A673 (cell line): ENCODE measurements at regions of chr3 and their contacts with region 1.

Region 1: GRCh38 chr3:167882067-167882667 is 146.6 kb downstream of the SERPINI1 start:
- DNase-seq: peak; percentile 54
- H3K4me3 ChIP-seq: no peak overlapping the region
- H3K27ac ChIP-seq: no peak overlapping the region
- H3K4me1 ChIP-seq: no peaks in the 10 kb centered on the region
- H3K27me3 ChIP-seq: no peaks in the 10 kb centered on the region
- CTCF ChIP-seq: peak; percentile 70

Region 2: GRCh38 chr3:167380004-167380689 is 502.0 kb before region 1 on chr3 and contains the start of gene ZBBX:
- CTCF ChIA-PET with region 1: interaction called, 13 read pairs
- POLR2A ChIA-PET with region 1: no interaction called
- intact Hi-C with region 1: loop called (anchors 1 kb)
- DNase-seq: peak; percentile 90
- H3K4me3 ChIP-seq: peak within 1 kb of the TSS; percentile 38
- H3K27ac ChIP-seq: no peak within 1 kb of the TSS
- H3K4me1 ChIP-seq: no peaks in the 10 kb centered on the region
- H3K27me3 ChIP-seq: no peaks in the 10 kb centered on the region
- CTCF ChIP-seq: peak; percentile 94
- total RNA-seq, gene ZBBX: not detected in 2 replicates

Region 3: DNA sequence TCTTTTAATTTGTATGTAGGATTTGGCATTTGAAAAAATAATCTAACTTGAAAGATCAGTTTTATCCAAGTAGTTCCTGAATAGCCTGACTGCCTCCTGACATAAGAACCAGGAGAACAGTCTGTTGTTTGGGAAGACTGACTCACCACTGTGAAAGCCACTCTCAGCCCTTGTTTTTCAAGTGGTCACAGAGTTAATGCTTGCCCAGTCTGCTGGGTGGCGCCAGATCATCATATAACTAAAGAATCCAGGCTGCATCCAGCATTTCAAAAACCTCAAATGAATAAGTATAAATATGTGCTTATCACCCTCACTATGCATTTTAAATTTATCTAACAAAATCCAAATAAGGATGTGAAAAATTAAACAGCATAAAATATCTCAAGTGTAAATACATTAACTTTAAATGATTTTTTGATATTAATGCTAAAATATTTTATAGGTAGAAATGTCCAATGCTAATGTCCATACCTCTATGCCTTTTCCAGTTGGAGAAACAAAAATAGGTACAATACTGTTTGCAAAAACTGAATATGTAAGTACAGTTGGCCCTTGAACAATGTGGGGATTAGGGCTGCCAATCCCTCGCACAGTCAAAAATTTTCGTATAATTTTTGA is 475.2 kb before region 1 on chr3:
- CTCF ChIA-PET with region 1: no interaction called
- POLR2A ChIA-PET with region 1: no interaction called
- intact Hi-C with region 1: loop called (anchors 5 kb)
- DNase-seq: peak; percentile 64
- H3K4me3 ChIP-seq: no peak overlapping the region
- H3K27ac ChIP-seq: no peak overlapping the region
- H3K4me1 ChIP-seq: no peaks in the 10 kb centered on the region
- H3K27me3 ChIP-seq: no peaks in the 10 kb centered on the region
- CTCF ChIP-seq: peak; percentile 65

Region 4: DNA sequence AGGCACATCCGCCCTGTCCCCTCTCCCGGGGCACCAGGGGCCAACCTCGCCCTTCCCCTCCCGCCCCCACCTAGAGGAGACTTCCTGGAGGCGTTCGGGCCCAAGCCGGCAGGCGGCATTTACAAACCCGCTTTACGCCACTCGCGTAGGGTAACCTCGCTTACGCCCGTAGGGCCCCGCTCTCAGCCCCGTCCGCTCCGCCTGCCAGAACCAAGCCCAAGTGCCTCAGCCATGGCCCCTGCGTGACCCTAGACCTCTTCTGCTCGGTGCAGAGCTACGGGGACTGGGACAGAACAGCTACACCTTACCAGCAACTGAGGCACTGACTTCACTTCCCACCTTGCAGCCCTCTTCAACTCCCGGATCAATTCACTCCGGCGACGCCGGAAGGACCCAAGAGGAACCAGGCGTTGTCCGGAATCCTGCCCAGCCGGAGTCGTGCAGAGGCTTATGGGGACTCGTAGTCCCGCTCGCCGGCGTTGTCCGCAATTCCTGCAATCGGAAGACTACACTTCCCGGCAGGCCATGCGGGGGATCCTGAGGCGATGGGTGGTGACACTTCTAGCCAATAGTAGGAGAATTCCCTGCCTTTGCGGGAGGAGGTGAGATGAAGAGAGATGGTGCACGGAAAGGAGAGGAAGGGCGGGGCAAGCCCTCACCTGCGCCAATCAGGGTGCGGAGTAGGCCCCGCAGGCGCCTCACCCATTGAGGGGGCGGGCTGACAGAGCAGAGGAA is 147.5 kb before region 1 on chr3 and contains the start of gene PDCD10:
- CTCF ChIA-PET with region 1: no interaction called
- POLR2A ChIA-PET with region 1: no interaction called
- intact Hi-C with region 1: loop called (anchors 1 kb)
- DNase-seq: peak; percentile 99
- H3K4me3 ChIP-seq: peak within 1 kb of the TSS; percentile 74
- H3K27ac ChIP-seq: peak within 1 kb of the TSS; percentile 77
- H3K4me1 ChIP-seq: peaks cover 12% of the 10 kb centered on the region
- H3K27me3 ChIP-seq: peaks cover 13% of the 10 kb centered on the region
- CTCF ChIP-seq: no peak
- total RNA-seq, gene PDCD10: 43.9 and 47.0 TPM in 2 replicates

Region 5: DNA sequence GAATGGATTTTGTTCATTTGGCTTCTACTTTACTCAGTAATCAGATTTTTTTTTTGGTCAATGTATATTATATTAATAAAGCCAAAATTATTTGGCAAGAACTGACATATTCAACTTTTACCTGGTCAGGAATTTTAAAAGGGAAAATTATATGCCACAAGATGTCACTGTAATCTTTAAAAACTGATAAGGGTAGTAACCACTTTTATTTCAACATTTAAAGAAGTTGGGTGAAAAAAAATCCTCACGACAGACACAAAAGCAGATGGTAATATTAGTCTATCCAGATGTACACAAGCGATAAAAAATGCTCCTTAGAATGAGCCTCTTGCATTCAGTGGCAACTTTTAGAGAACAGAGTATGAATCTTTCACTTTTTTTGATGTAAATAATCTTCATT is 44.7 kb before region 1 on chr3:
- CTCF ChIA-PET with region 1: no interaction called
- POLR2A ChIA-PET with region 1: no interaction called
- intact Hi-C with region 1: loop called (anchors 5 kb)
- DNase-seq: no peak
- H3K4me3 ChIP-seq: no peak overlapping the region
- H3K27ac ChIP-seq: no peak overlapping the region
- H3K4me1 ChIP-seq: no peaks in the 10 kb centered on the region
- H3K27me3 ChIP-seq: peaks cover 2% of the 10 kb centered on the region
- CTCF ChIP-seq: no peak; the same call in 1 of the 2 replicates